ENCODE measurements at regions of chr22 and their contacts with region 1.

Region 1: DNA sequence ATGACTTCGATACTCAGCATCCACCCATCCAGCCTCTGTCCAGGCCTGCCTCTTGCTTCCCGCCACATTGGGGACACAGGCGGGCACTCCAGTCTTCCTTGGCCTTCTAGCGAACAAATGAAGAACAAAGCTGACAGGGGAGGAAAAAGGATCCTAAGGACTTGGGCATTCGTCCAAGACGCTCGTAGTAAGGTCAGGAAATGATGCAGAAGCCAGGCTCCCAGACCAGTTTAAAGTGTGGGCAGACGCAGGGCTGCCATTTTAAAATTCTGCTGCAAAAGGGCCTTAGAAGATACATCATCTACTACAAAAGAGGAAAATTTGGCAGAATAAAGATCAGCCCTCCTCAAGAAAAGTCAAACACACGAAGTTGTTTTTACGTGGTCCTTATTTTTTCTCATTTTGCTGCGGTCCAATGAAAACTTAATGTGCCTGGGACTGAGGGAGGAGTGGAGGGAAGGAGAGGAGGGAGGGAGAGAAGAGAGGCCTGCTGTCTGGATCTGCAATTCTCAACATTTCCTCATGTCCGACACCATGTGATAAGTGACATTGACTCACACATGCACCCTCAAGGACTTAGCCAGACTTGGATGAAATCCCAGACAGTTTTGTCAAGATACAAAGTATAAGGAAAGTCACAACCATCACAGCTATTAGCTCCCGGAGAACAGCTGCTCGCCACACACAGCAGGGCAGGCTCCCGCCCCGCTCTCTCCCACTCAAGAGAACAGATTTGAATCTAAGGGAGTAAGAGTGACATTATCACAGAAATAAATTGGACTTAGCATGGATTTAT is 5.7 kb downstream of the DNAL4 start:
- DNase-seq: no peak

Region 2: GRCh38 chr22:38831166-38831945 is 43.1 kb after region 1 on chr22:
- intact Hi-C with region 1: loop called (anchors 5 kb)
- DNase-seq: peak in 3 of 10 donors; percentile 18 to 86 (median 61)